ENCODE measurements at regions of chr1 and their contacts with region 1.

Region 1: DNA sequence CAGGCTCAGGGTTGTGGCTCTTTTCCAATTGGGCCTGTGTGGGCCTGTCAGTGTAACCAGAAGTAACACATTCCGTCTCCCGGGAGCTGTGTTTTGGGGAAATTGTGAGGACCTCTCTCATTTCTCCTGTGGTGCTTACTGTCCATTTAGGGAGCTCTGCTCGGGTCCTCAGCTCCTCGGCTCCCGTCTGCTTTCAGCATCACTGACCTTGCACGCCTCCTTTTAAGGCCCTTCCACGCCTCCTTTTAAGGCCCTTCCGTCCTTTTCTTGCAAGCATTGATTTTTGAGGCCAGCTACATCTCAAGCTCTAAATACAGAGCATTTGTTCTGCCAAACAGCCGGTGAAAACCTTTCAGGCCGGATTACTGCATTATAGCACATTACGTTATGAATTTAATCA is 9.7 kb downstream of the CA6 start:
- DNase-seq: no peak
- ATAC-seq: no peak
- H3K4me3 ChIP-seq: no peak overlapping the region
- H3K4me3 Mint-ChIP-seq: no peak overlapping the region
- H3K27ac ChIP-seq: no peak overlapping the region
- H3K27ac Mint-ChIP-seq: peak overlapping the region in 7 of 9 donors; percentile 24 to 84 (median 70)
- H3K4me1 ChIP-seq: peaks cover 0 to 18% of the 10 kb centered on the region in 2 donors
- H3K4me1 Mint-ChIP-seq: peaks cover 0 to 58% (median 37%) of the 10 kb centered on the region in 7 donors
- H3K27me3 ChIP-seq: no peaks in the 10 kb centered on the region
- H3K27me3 Mint-ChIP-seq: no peaks in the 10 kb centered on the region

Region 2: DNA sequence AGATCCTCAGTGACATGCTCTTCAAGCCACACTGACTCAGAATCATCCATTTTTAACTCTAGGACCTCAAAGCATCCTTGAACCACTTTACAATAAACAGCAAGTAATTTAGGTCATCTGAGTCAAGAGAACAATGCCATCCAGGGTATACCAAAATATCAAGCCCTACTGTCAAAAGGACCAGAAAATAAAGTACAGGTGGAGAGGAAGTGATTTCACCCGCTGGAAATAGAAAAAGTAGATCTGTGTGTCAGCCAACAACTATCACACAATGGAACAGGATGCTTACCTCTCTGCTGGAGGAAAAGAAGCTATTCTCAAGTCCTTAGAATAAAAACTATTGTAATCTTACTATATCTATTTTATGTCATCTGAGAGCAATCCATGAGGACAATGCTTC is 175.0 kb before region 1 on chr1:
- CTCF ChIA-PET with region 1: no interaction called
- POLR2A ChIA-PET with region 1: no interaction called
- intact Hi-C with region 1: no loop called
- DNase-seq: peak in 1 of 9 donors; percentile 1
- ATAC-seq: no peak
- H3K4me3 ChIP-seq: no peak overlapping the region
- H3K4me3 Mint-ChIP-seq: no peak overlapping the region
- H3K27ac ChIP-seq: no peak overlapping the region
- H3K27ac Mint-ChIP-seq: no peak overlapping the region
- H3K4me1 ChIP-seq: no peaks in the 10 kb centered on the region
- H3K4me1 Mint-ChIP-seq: peaks cover 0 to 36% (median 24%) of the 10 kb centered on the region in 7 donors
- H3K27me3 ChIP-seq: no peaks in the 10 kb centered on the region
- H3K27me3 Mint-ChIP-seq: no peaks in the 10 kb centered on the region

Region 3: GRCh38 chr1:8941906-8942305 is 13.5 kb before region 1 on chr1:
- CTCF ChIA-PET with region 1: interaction called, 4 read pairs
- POLR2A ChIA-PET with region 1: interaction called, 10 read pairs
- intact Hi-C with region 1: loop called (anchors 1 kb)
- DNase-seq: no peak
- ATAC-seq: no peak
- H3K4me3 ChIP-seq: no peak overlapping the region
- H3K4me3 Mint-ChIP-seq: peak overlapping the region in 1 of 10 donors; percentile 44
- H3K27ac ChIP-seq: no peak overlapping the region
- H3K27ac Mint-ChIP-seq: peak overlapping the region in 4 of 9 donors; percentile 38 to 86 (median 63)
- H3K4me1 ChIP-seq: peaks cover 19 to 80% of the 10 kb centered on the region in 2 donors
- H3K4me1 Mint-ChIP-seq: peaks cover 65 to 90% (median 81%) of the 10 kb centered on the region in 7 donors
- H3K27me3 ChIP-seq: no peaks in the 10 kb centered on the region
- H3K27me3 Mint-ChIP-seq: no peaks in the 10 kb centered on the region

Region 4: DNA sequence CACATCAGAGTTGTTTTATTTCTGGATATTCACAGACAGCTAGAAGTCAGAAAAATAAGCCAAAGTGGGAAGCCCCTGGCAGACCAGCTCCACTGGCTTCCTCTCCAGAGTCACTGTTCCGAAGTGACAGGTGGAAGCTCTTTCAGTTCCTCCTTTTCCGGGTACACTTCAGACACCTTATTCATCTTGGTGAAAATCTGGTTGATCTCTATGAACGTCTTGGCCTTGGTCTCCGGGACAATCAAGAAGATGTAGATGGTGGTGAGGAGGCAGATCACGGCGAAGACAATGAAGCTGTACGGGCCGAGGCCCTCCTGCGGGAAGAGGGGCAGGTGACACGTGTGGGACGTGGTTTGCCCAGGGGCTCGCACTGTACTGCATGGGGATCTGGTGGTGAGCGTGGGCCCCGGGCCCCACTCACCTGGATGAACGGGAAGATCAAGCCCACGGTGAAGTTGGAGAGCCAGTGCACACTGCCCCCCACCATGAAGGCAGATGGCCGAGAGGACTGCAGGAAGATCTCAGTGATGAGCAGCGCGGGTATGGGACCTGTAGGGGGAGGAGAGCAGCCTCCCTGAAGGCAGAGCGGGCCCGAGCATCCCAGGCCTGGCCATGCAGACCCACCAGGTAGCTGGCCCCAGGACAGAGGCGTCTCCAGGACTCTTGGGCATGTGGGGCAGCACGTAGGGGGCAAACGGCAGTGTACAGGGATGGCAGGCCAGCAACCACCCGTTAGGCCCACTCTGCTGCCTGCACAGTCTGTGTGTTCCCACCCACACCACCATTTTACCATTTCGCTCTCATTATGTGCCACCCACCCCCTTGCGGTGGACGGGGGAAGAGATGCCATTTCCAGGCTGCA is 82.3 kb after region 1 on chr1:
- CTCF ChIA-PET with region 1: no interaction called
- POLR2A ChIA-PET with region 1: no interaction called
- intact Hi-C with region 1: no loop called
- DNase-seq: no peak
- ATAC-seq: no peak
- H3K4me3 ChIP-seq: no peak overlapping the region
- H3K4me3 Mint-ChIP-seq: no peak overlapping the region
- H3K27ac ChIP-seq: no peak overlapping the region
- H3K27ac Mint-ChIP-seq: peak overlapping the region in 1 of 9 donors; percentile 3
- H3K4me1 ChIP-seq: no peaks in the 10 kb centered on the region
- H3K4me1 Mint-ChIP-seq: no peaks in the 10 kb centered on the region
- H3K27me3 ChIP-seq: no peaks in the 10 kb centered on the region
- H3K27me3 Mint-ChIP-seq: peaks cover 0 to 12% (median 6%) of the 10 kb centered on the region in 5 donors